B cell (primary cell): ENCODE measurements at regions of chr9 and their contacts with region 1.

Region 1: GRCh38 chr9:70413798-70414775 is at the start of gene KLF9:
- DNase-seq: peak; percentile 95
- ATAC-seq: peak; percentile 73
- H3K4me3 ChIP-seq: peak within 1 kb of the TSS; percentile 60 to 96 (median 94)
- H3K4me3 Mint-ChIP-seq: peak within 1 kb of the TSS; percentile 100
- H3K27ac ChIP-seq: peak within 1 kb of the TSS; percentile 95 to 98
- H3K27ac Mint-ChIP-seq: peak within 1 kb of the TSS; percentile 100
- H3K4me1 ChIP-seq: peaks cover 38 to 45% of the 10 kb centered on the region in 2 donors
- H3K4me1 Mint-ChIP-seq: peaks cover 47% of the 10 kb centered on the region
- H3K27me3 ChIP-seq: no peaks in the 10 kb centered on the region
- H3K27me3 Mint-ChIP-seq: no peaks in the 10 kb centered on the region
- CTCF ChIP-seq: no peak
- total RNA-seq, gene KLF9: 12.1 and 12.7 TPM in 2 replicates

Region 2: GRCh38 chr9:68643901-68644809 is 1769.9 kb before region 1 on chr9:
- CTCF ChIA-PET with region 1: no interaction called
- POLR2A ChIA-PET with region 1: no interaction called
- intact Hi-C with region 1: loop called (anchors 5 kb)
- DNase-seq: peak; percentile 83
- ATAC-seq: peak; percentile 61
- H3K4me3 ChIP-seq: peak overlapping the region in 1 of 5 experiments; percentile 42
- H3K4me3 Mint-ChIP-seq: peak overlapping the region; percentile 70
- H3K27ac ChIP-seq: peak overlapping the region; percentile 91 to 97
- H3K27ac Mint-ChIP-seq: peak overlapping the region; percentile 91
- H3K4me1 ChIP-seq: peaks cover 83 to 91% of the 10 kb centered on the region in 2 donors
- H3K4me1 Mint-ChIP-seq: peaks cover 89% of the 10 kb centered on the region
- H3K27me3 ChIP-seq: no peaks in the 10 kb centered on the region
- H3K27me3 Mint-ChIP-seq: no peaks in the 10 kb centered on the region
- CTCF ChIP-seq: no peak

Region 3: GRCh38 chr9:70258692-70259511 is 155.2 kb before region 1 on chr9 and contains the start of gene SMC5:
- CTCF ChIA-PET with region 1: no interaction called
- POLR2A ChIA-PET with region 1: no interaction called
- intact Hi-C with region 1: loop called (anchors 1 kb)
- DNase-seq: peak; percentile 95
- ATAC-seq: peak; percentile 86
- H3K4me3 ChIP-seq: peak within 1 kb of the TSS; percentile 72 to 96 (median 93)
- H3K4me3 Mint-ChIP-seq: peak within 1 kb of the TSS; percentile 92
- H3K27ac ChIP-seq: peak within 1 kb of the TSS; percentile 89 to 93
- H3K27ac Mint-ChIP-seq: peak within 1 kb of the TSS; percentile 97
- H3K4me1 ChIP-seq: peaks cover 26 to 34% of the 10 kb centered on the region in 2 donors
- H3K4me1 Mint-ChIP-seq: peaks cover 45% of the 10 kb centered on the region
- H3K27me3 ChIP-seq: no peaks in the 10 kb centered on the region
- H3K27me3 Mint-ChIP-seq: no peaks in the 10 kb centered on the region
- CTCF ChIP-seq: no peak
- total RNA-seq, gene SMC5: 75.0 and 82.1 TPM in 2 replicates

Region 4: DNA sequence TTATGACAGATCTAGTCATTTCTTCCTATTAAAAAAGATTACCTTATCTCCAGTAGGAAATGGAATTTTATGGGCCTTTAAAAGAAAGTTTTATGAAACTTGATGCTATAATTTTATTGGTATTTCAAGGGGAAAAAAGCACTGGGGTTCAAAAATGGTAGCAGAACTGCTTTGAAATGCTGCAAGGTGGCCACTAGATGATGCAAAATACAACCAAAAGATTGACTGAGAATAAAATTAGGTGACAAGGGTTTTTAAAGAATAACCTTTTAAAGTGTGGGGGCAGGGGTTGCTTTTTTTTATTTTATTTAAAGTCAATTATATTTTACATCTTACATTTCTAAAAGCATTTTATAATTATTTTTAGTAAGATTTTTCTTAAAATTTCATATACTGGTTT is 61.3 kb before region 1 on chr9:
- CTCF ChIA-PET with region 1: no interaction called
- POLR2A ChIA-PET with region 1: no interaction called
- intact Hi-C with region 1: loop called (anchors 2 kb)
- DNase-seq: peak; percentile 24
- ATAC-seq: no peak
- H3K4me3 ChIP-seq: no peak overlapping the region
- H3K4me3 Mint-ChIP-seq: no peak overlapping the region
- H3K27ac ChIP-seq: no peak overlapping the region
- H3K27ac Mint-ChIP-seq: no peak overlapping the region
- H3K4me1 ChIP-seq: no peaks in the 10 kb centered on the region
- H3K4me1 Mint-ChIP-seq: no peaks in the 10 kb centered on the region
- H3K27me3 ChIP-seq: no peaks in the 10 kb centered on the region
- H3K27me3 Mint-ChIP-seq: no peaks in the 10 kb centered on the region
- CTCF ChIP-seq: peak; percentile 75

Region 5: GRCh38 chr9:70427161-70427945 is 13.3 kb after region 1 on chr9:
- CTCF ChIA-PET with region 1: no interaction called
- POLR2A ChIA-PET with region 1: no interaction called
- intact Hi-C with region 1: no loop called
- DNase-seq: no peak
- ATAC-seq: no peak
- H3K4me3 ChIP-seq: no peak overlapping the region
- H3K4me3 Mint-ChIP-seq: no peak overlapping the region
- H3K27ac ChIP-seq: no peak overlapping the region
- H3K27ac Mint-ChIP-seq: no peak overlapping the region
- H3K4me1 ChIP-seq: no peaks in the 10 kb centered on the region
- H3K4me1 Mint-ChIP-seq: peaks cover 4% of the 10 kb centered on the region
- H3K27me3 ChIP-seq: no peaks in the 10 kb centered on the region
- H3K27me3 Mint-ChIP-seq: peaks cover 11% of the 10 kb centered on the region
- CTCF ChIP-seq: no peak

Region 6: GRCh38 chr9:70484210-70485130 is 70.4 kb after region 1 on chr9:
- CTCF ChIA-PET with region 1: interaction called, 22 read pairs
- POLR2A ChIA-PET with region 1: interaction called, 3 read pairs
- intact Hi-C with region 1: no loop called
- DNase-seq: peak; percentile 67
- ATAC-seq: peak; percentile 78
- H3K4me3 ChIP-seq: no peak overlapping the region
- H3K4me3 Mint-ChIP-seq: no peak overlapping the region
- H3K27ac ChIP-seq: no peak overlapping the region
- H3K27ac Mint-ChIP-seq: no peak overlapping the region
- H3K4me1 ChIP-seq: no peaks in the 10 kb centered on the region
- H3K4me1 Mint-ChIP-seq: peaks cover 1% of the 10 kb centered on the region
- H3K27me3 ChIP-seq: peaks cover 0 to 3% (median 0%) of the 10 kb centered on the region in 4 experiments
- H3K27me3 Mint-ChIP-seq: peaks cover 24% of the 10 kb centered on the region
- CTCF ChIP-seq: peak; percentile 73

Region 7: GRCh38 chr9:70947086-70947485 is 533.0 kb after region 1 on chr9:
- CTCF ChIA-PET with region 1: no interaction called
- POLR2A ChIA-PET with region 1: no interaction called
- intact Hi-C with region 1: no loop called
- DNase-seq: no peak
- ATAC-seq: no peak
- H3K4me3 ChIP-seq: no peak overlapping the region
- H3K4me3 Mint-ChIP-seq: no peak overlapping the region
- H3K27ac ChIP-seq: no peak overlapping the region
- H3K27ac Mint-ChIP-seq: no peak overlapping the region
- H3K4me1 ChIP-seq: no peaks in the 10 kb centered on the region
- H3K4me1 Mint-ChIP-seq: no peaks in the 10 kb centered on the region
- H3K27me3 ChIP-seq: no peaks in the 10 kb centered on the region
- H3K27me3 Mint-ChIP-seq: peaks cover 3% of the 10 kb centered on the region
- CTCF ChIP-seq: no peak

Region 8: DNA sequence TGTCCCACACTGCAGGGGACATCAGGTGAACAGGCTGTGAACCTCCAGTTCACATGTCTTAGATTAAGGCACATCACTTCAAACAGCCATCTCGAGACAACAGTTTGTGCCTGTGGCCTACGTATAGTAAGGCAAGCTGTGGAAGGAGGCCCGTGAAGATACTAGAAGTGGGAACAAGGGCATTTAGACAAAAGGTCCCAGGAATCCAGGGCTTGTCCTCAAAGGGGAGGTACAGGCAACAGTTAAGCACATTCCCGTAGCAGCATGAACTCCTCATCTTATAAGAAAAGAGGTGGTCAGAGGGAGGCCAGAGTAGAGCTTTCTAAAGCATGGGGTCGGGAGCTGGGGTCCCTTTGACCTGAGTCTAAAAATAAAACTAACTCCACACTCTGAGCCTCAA is 829.9 kb after region 1 on chr9:
- CTCF ChIA-PET with region 1: no interaction called
- POLR2A ChIA-PET with region 1: no interaction called
- intact Hi-C with region 1: no loop called
- DNase-seq: no peak
- ATAC-seq: no peak
- H3K4me3 ChIP-seq: no peak overlapping the region
- H3K4me3 Mint-ChIP-seq: no peak overlapping the region
- H3K27ac ChIP-seq: no peak overlapping the region
- H3K27ac Mint-ChIP-seq: no peak overlapping the region
- H3K4me1 ChIP-seq: no peaks in the 10 kb centered on the region
- H3K4me1 Mint-ChIP-seq: no peaks in the 10 kb centered on the region
- H3K27me3 ChIP-seq: no peaks in the 10 kb centered on the region
- H3K27me3 Mint-ChIP-seq: peaks cover 5% of the 10 kb centered on the region
- CTCF ChIP-seq: no peak

Region 9: GRCh38 chr9:71795097-71795813 is 1381.2 kb after region 1 on chr9:
- CTCF ChIA-PET with region 1: no interaction called
- POLR2A ChIA-PET with region 1: no interaction called
- intact Hi-C with region 1: loop called (anchors 10 kb)
- DNase-seq: peak; percentile 87
- ATAC-seq: peak; percentile 87
- H3K4me3 ChIP-seq: peak overlapping the region in 1 of 5 experiments; percentile 40
- H3K4me3 Mint-ChIP-seq: peak overlapping the region; percentile 92
- H3K27ac ChIP-seq: peak overlapping the region; percentile 84 to 92
- H3K27ac Mint-ChIP-seq: peak overlapping the region; percentile 93
- H3K4me1 ChIP-seq: peaks cover 77 to 80% of the 10 kb centered on the region in 2 donors
- H3K4me1 Mint-ChIP-seq: peaks cover 70% of the 10 kb centered on the region
- H3K27me3 ChIP-seq: no peaks in the 10 kb centered on the region
- H3K27me3 Mint-ChIP-seq: no peaks in the 10 kb centered on the region
- CTCF ChIP-seq: no peak